ENCODE measurements at regions of chr19 and their contacts with region 1.

Region 1: GRCh38 chr19:43503501-43504425 is 783 bp downstream of the PHLDB3 start:
- DNase-seq: peak; percentile 88 to 94 (median 92)
- H3K4me3 ChIP-seq: peak overlapping the region; percentile 58 to 89 (median 73)
- H3K4me3 Mint-ChIP-seq: peak overlapping the region; percentile 96 to 97
- H3K27ac ChIP-seq: peak overlapping the region; percentile 68 to 74
- H3K27ac Mint-ChIP-seq: peak overlapping the region; percentile 82 to 96 (median 91)
- H3K4me1 ChIP-seq: peaks cover 18 to 28% of the 10 kb centered on the region in 2 donors
- H3K4me1 Mint-ChIP-seq: peaks cover 22% of the 10 kb centered on the region
- H3K27me3 ChIP-seq: no peaks in the 10 kb centered on the region
- H3K27me3 Mint-ChIP-seq: peaks cover 2 to 9% (median 5%) of the 10 kb centered on the region in 3 donors
- CTCF ChIP-seq: no peak

Region 2: DNA sequence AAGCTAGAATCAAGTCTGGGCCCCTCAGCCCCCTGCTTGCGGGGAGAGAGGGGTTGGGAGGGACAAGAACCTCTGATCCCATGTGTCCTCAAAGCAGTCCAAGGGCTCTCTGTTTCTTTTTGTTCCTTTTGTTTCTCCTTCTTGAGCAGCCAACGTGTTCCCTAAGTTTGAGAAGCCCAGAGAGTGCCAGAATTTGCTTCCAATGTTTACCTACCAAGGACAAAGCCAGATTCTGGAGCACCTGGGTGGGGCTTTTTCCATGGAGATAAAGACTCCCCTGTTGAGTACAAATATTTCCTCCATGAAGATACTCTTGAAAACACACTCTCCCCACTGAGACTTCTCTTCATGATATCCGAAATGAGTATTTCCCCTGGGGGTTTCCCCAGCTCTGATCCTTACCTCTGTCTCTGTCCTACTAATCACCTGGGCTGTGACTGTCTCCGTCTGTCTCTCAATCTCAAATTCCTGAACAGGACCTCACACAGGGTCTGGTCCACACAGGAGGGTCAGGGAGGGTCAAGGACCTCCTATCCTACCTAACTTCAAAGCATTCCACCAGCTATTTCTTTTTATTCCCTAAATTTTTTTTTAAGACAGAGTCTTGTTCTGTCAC is 122.9 kb before region 1 on chr19:
- intact Hi-C with region 1: no loop called
- DNase-seq: no peak
- H3K4me3 ChIP-seq: no peak overlapping the region
- H3K4me3 Mint-ChIP-seq: no peak overlapping the region
- H3K27ac ChIP-seq: no peak overlapping the region
- H3K27ac Mint-ChIP-seq: no peak overlapping the region
- H3K4me1 ChIP-seq: no peaks in the 10 kb centered on the region
- H3K4me1 Mint-ChIP-seq: no peaks in the 10 kb centered on the region
- H3K27me3 ChIP-seq: no peaks in the 10 kb centered on the region
- H3K27me3 Mint-ChIP-seq: peaks cover 0 to 5% (median 2%) of the 10 kb centered on the region in 3 donors
- CTCF ChIP-seq: no peak

Region 3: DNA sequence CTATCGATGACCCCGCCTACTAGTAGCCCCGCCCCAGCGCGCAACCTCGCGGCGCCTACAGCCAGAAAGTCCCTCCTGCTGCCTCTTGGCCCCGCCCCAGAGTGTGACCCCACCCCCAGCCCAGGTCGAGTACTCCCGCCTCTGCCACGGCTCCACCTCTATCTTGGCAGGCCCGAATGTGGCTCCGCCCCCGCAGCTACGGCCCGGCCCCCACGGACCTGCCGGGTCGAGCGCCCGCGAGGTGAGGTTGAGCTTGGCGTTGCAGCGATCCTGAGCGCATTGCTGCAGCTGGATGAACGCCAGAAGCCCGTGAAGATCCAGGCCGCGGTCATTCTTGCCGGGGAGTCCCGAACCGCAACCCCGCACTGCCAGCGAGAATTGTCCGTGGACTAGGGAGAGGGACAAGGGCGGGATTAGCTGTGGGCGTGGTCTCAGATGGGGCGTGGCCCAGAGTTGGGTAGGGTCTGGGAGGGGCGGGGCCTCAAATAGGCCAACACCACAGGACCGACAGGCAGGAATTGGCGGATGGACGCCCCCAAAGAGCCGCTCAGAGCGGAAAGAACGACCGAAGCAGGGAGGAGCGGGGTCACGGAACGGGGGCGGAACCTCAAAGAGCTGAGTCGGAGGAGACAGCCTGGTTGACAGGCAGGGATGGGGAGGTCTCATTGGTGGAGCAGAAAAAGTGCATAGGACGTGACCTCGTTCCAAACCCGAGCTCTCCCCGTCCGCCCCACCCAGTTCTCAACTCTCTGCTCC is 40.2 kb before region 1 on chr19:
- intact Hi-C with region 1: loop called in 1 of 2 experiments (anchors 1 kb)
- DNase-seq: peak; percentile 93 to 96 (median 95)
- H3K4me3 ChIP-seq: peak overlapping the region; percentile 68 to 88 (median 80)
- H3K4me3 Mint-ChIP-seq: peak overlapping the region; percentile 94 to 97
- H3K27ac ChIP-seq: peak overlapping the region; percentile 70 to 90
- H3K27ac Mint-ChIP-seq: peak overlapping the region; percentile 94 to 99 (median 98)
- H3K4me1 ChIP-seq: peaks cover 45 to 50% of the 10 kb centered on the region in 2 donors
- H3K4me1 Mint-ChIP-seq: peaks cover 42% of the 10 kb centered on the region
- H3K27me3 ChIP-seq: no peaks in the 10 kb centered on the region
- H3K27me3 Mint-ChIP-seq: peaks cover 10 to 24% (median 15%) of the 10 kb centered on the region in 3 donors
- CTCF ChIP-seq: no peak

Region 4: DNA sequence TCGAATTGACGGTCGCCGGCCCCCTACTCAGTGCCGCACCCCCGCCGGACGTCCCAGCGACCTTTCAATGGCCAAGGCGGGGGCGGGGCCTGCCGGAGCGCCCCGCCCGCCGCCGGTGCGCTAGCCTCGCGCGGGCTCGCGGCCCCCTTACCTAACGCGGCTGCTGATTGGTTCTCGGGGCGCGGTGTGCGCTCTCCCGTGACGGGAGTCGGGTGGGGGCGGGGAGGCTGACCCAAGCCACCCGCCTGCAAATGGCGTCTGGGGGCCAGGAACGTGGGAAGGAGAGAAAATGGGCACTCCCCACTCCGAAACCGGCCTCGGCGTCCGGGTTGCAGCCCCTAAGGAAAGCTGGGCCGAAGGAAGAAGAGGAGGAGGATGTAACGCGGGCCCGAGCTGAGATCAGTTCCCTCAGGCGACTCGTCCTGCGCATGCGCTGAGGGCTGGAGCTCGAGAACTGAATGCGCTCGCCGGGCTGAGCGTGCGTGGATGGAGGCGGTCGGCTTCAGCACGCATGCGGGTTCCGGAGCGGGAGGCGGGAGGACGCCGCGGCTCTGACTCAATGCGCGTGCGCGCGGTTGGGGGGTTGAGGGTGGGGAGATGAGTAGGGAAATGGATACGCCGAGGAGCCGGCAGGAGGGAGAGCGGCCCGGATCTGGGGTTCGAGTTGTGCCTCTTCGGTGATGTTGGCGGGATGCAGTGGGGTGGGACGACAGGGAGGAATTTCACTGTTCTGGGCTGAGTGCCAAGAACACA is 250.9 kb after region 1 on chr19 and contains the start of gene SMG9:
- intact Hi-C with region 1: no loop called
- DNase-seq: peak; percentile 96 to 98 (median 98)
- H3K4me3 ChIP-seq: peak within 1 kb of the TSS; percentile 55 to 89 (median 83)
- H3K4me3 Mint-ChIP-seq: peak within 1 kb of the TSS; percentile 93 to 94
- H3K27ac ChIP-seq: peak within 1 kb of the TSS; percentile 96
- H3K27ac Mint-ChIP-seq: peak within 1 kb of the TSS; percentile 96 to 99 (median 98)
- H3K4me1 ChIP-seq: peaks cover 48 to 55% of the 10 kb centered on the region in 2 donors
- H3K4me1 Mint-ChIP-seq: peaks cover 66% of the 10 kb centered on the region
- H3K27me3 ChIP-seq: no peaks in the 10 kb centered on the region
- H3K27me3 Mint-ChIP-seq: no peaks in the 10 kb centered on the region
- CTCF ChIP-seq: no peak
- polyA plus RNA-seq, gene SMG9: 1.3 to 26.1 (median 2.4) TPM